ENCODE measurements at regions of chr20 and their contacts with region 1.

Region 1: GRCh38 chr20:8007490-8007889 is 12.1 kb downstream of the TMX4 start:
- DNase-seq: peak in 2 of 3 donors; percentile 29 to 40
- H3K4me3 ChIP-seq: no peak overlapping the region
- H3K27ac ChIP-seq: no peak overlapping the region
- H3K4me1 ChIP-seq: no peaks in the 10 kb centered on the region
- H3K27me3 ChIP-seq: no peaks in the 10 kb centered on the region

Region 2: GRCh38 chr20:8019246-8019997 is 11.9 kb after region 1 on chr20 and contains the start of gene TMX4:
- CTCF ChIA-PET with region 1: interaction called, 11 read pairs
- POLR2A ChIA-PET with region 1: no interaction called
- DNase-seq: peak; percentile 92 to 95 (median 94)
- H3K4me3 ChIP-seq: peak within 1 kb of the TSS; percentile 70 to 91 (median 81)
- H3K27ac ChIP-seq: peak within 1 kb of the TSS; percentile 75 to 91
- H3K4me1 ChIP-seq: peaks cover 18 to 42% (median 29%) of the 10 kb centered on the region in 4 experiments
- H3K27me3 ChIP-seq: no peaks in the 10 kb centered on the region

Region 3: DNA sequence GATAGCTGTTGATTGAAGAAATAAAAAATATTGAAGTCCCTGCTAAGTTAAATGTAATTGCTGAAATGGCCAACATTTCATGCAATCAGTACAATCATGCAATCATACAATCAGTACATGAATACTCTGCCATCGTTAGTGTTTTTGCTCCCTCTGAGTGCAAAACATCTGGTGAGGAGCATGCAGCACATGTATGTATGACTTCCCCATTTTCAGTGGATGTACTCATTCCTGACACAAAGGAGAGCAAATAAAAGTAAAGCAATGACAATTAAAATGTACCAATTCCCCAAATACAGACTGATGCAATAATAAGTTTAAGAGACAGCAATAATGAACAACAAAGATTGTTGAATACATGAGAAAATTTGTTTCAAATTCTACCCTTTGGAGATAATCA is 265.3 kb after region 1 on chr20:
- CTCF ChIA-PET with region 1: no interaction called
- POLR2A ChIA-PET with region 1: no interaction called
- DNase-seq: peak in 2 of 3 donors; percentile 83 to 91
- H3K4me3 ChIP-seq: peak overlapping the region in 1 of 7 experiments; percentile 16
- H3K27ac ChIP-seq: peak overlapping the region in 1 of 2 experiments; percentile 36
- H3K4me1 ChIP-seq: peaks cover 15 to 49% (median 34%) of the 10 kb centered on the region in 4 experiments
- H3K27me3 ChIP-seq: no peaks in the 10 kb centered on the region

Measured in common myeloid progenitor, CD34-positive (primary cell).